Panc1 (cell line): ENCODE measurements at regions of chr1 and their contacts with region 1.

Region 1: GRCh38 chr1:28796352-28797211 is 15.4 kb upstream of the OPRD1 start:
- DNase-seq: no peak
- ATAC-seq: peak; percentile 65; the same call in 1 of the 2 replicates
- H3K4me3 ChIP-seq: no peak overlapping the region
- H3K27ac ChIP-seq: no peak overlapping the region
- H3K4me1 ChIP-seq: peaks cover 6% of the 10 kb centered on the region
- H3K27me3 ChIP-seq: no peaks in the 10 kb centered on the region
- CTCF ChIP-seq: no peak

Region 2: GRCh38 chr1:28668191-28668955 is 128.2 kb before region 1 on chr1 and contains the start of gene GMEB1:
- CTCF ChIA-PET with region 1: no interaction called
- POLR2A ChIA-PET with region 1: no interaction called
- in situ Hi-C with region 1: no loop called
- intact Hi-C with region 1: no loop called
- DNase-seq: peak; percentile 42
- ATAC-seq: peak; percentile 95
- H3K4me3 ChIP-seq: peak within 1 kb of the TSS; percentile 74 to 95
- H3K27ac ChIP-seq: peak within 1 kb of the TSS; percentile 100
- H3K4me1 ChIP-seq: peaks cover 13% of the 10 kb centered on the region
- H3K27me3 ChIP-seq: no peaks in the 10 kb centered on the region
- CTCF ChIP-seq: no peak
- total RNA-seq, gene GMEB1: 13.8 TPM

Region 3: GRCh38 chr1:28845786-28846543 is 49.4 kb after region 1 on chr1:
- CTCF ChIA-PET with region 1: no interaction called
- POLR2A ChIA-PET with region 1: no interaction called
- in situ Hi-C with region 1: no loop called
- intact Hi-C with region 1: loop called (anchors 5 kb)
- DNase-seq: peak; percentile 7
- ATAC-seq: peak; percentile 90
- H3K4me3 ChIP-seq: no peak overlapping the region
- H3K27ac ChIP-seq: no peak overlapping the region
- H3K4me1 ChIP-seq: no peaks in the 10 kb centered on the region
- H3K27me3 ChIP-seq: no peaks in the 10 kb centered on the region
- CTCF ChIP-seq: no peak

Region 4: DNA sequence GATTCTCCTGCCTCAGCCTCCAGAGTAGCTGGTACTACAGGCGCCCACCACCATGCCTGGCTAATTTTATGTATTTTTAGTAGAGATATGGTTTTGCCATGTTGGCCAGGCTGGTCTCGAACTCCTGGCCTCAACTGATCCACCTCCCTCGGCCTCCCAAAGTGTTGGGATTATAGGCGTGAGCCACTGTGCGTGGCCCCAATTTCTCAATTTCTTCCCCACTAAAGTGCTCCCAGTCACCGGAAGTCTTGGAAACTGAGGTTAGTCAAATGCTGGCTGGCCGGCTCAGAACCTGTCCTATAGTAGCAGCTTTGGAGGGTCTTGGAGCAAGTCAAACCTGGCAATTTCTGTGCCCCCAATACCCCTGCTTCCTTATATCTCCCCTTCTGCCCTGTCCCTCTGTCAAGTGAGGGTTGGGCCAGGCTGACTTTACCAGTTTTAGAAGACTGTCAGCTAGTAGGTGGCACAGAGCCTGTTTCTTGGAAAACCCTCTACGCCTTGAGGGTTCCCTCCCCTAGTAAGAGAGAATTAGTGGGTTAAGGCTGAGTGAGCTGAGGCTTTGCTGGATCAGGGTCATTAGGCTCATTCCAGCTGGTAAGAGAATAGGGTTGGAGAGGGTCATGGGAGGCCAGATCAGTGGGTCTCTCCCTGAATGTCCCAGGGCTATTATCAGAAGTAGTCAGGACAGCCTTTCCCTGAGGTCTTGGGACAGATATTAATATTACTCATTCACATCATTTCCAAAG is 109.5 kb after region 1 on chr1:
- CTCF ChIA-PET with region 1: no interaction called
- POLR2A ChIA-PET with region 1: no interaction called
- in situ Hi-C with region 1: no loop called
- intact Hi-C with region 1: no loop called
- DNase-seq: no peak
- ATAC-seq: 0 out of 2 replicates have a peak, but pooled peaks have one; percentile 38
- H3K4me3 ChIP-seq: no peak overlapping the region
- H3K27ac ChIP-seq: no peak overlapping the region
- H3K4me1 ChIP-seq: no peaks in the 10 kb centered on the region
- H3K27me3 ChIP-seq: no peaks in the 10 kb centered on the region
- CTCF ChIP-seq: no peak